ENCODE measurements at regions of chr10 and their contacts with region 1.

Region 1: GRCh38 chr10:121927841-121928527 is at the start of gene ATE1:
- DNase-seq: peak; percentile 84
- ATAC-seq: peak; percentile 81
- H3K4me3 ChIP-seq: peak within 1 kb of the TSS; percentile 77
- H3K27ac ChIP-seq: peak within 1 kb of the TSS; percentile 94
- H3K4me1 ChIP-seq: peaks cover 12% of the 10 kb centered on the region
- H3K27me3 ChIP-seq: no peaks in the 10 kb centered on the region
- CTCF ChIP-seq: no peak
- total RNA-seq, gene ATE1: 7.9 and 12.8 TPM in 2 replicates

Region 2: GRCh38 chr10:121608469-121609190 is 319.4 kb before region 1 on chr10:
- CTCF ChIA-PET with region 1: no interaction called
- POLR2A ChIA-PET with region 1: no interaction called
- intact Hi-C with region 1: no loop called
- DNase-seq: peak; percentile 48
- ATAC-seq: peak; percentile 88
- H3K4me3 ChIP-seq: no peak overlapping the region
- H3K27ac ChIP-seq: no peak overlapping the region
- H3K4me1 ChIP-seq: no peaks in the 10 kb centered on the region
- H3K27me3 ChIP-seq: peaks cover 7% of the 10 kb centered on the region; the same call in 1 of the 2 replicates
- CTCF ChIP-seq: peak; percentile 78

Region 3: GRCh38 chr10:121886997-121887622 is 40.9 kb before region 1 on chr10:
- CTCF ChIA-PET with region 1: no interaction called
- POLR2A ChIA-PET with region 1: no interaction called
- intact Hi-C with region 1: no loop called
- DNase-seq: peak; percentile 68
- ATAC-seq: peak; percentile 87
- H3K4me3 ChIP-seq: no peak overlapping the region
- H3K27ac ChIP-seq: no peak overlapping the region
- H3K4me1 ChIP-seq: peaks cover 8% of the 10 kb centered on the region; the same call in 1 of the 2 replicates
- H3K27me3 ChIP-seq: no peaks in the 10 kb centered on the region
- CTCF ChIP-seq: peak; percentile 78

Region 4: GRCh38 chr10:121942749-121943416 is 14.9 kb after region 1 on chr10:
- CTCF ChIA-PET with region 1: no interaction called
- POLR2A ChIA-PET with region 1: interaction called, 11 read pairs
- intact Hi-C with region 1: no loop called
- DNase-seq: peak; percentile 88
- ATAC-seq: peak; percentile 100
- H3K4me3 ChIP-seq: no peak overlapping the region
- H3K27ac ChIP-seq: peak overlapping the region; percentile 90
- H3K4me1 ChIP-seq: peaks cover 16% of the 10 kb centered on the region
- H3K27me3 ChIP-seq: no peaks in the 10 kb centered on the region
- CTCF ChIP-seq: no peak

Region 5: DNA sequence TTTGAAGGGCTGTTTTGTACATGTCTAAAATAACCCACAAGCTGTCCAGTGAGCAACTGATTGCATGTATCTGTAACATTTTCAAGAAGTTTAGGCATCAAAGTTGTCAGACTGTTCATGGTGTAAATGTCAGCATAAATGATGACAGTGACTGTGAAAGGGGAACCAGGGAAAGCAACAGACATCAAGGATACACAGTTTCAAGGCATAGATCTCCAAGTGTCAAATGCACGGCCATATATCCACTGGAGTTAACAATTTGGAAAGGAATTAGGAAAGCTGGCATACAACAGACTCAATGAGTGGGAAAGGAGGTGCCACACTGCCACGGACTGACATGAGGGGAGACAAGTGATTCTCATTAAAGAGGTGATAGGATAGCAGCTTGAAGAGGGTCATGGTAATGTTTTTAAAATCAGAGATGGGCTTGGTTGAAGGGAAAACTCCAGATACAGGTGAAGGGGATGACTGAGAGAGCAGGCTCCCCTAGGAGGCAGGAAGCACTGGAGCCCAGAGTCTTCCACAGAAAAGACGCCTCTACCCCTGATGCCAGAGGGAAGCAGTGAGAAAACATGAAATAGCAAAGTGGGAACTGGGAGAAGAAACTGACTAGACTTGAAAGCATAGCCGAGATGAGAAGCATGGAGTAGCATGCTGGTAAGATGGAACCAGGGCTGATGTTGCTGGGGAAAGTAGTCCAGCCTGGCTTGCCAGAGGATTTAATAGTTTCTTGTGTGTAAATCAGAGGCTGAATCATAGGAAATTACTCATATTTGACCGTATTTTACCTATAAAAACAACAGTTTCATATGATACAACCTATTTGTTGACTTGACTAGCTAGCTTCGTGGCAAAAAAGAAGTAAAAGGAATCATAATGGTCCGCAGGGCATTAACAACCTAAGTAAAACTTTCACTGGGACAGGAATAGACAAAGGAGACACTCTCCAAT is 28.4 kb after region 1 on chr10:
- CTCF ChIA-PET with region 1: no interaction called
- POLR2A ChIA-PET with region 1: no interaction called
- intact Hi-C with region 1: loop called (anchors 2 kb)
- DNase-seq: peak; percentile 83
- ATAC-seq: peak; percentile 92
- H3K4me3 ChIP-seq: peak overlapping the region; percentile 18; the same call in 1 of the 2 replicates
- H3K27ac ChIP-seq: peak overlapping the region; percentile 92
- H3K4me1 ChIP-seq: peaks cover 17% of the 10 kb centered on the region
- H3K27me3 ChIP-seq: no peaks in the 10 kb centered on the region
- CTCF ChIP-seq: no peak

Region 6: GRCh38 chr10:121974535-121975294 is 46.7 kb after region 1 on chr10 and contains the start of gene NSMCE4A:
- CTCF ChIA-PET with region 1: no interaction called
- POLR2A ChIA-PET with region 1: no interaction called
- intact Hi-C with region 1: loop called (anchors 1 kb)
- DNase-seq: peak; percentile 71
- ATAC-seq: peak; percentile 81
- H3K4me3 ChIP-seq: peak within 1 kb of the TSS; percentile 90
- H3K27ac ChIP-seq: peak within 1 kb of the TSS; percentile 90
- H3K4me1 ChIP-seq: peaks cover 7% of the 10 kb centered on the region; the same call in 1 of the 2 replicates
- H3K27me3 ChIP-seq: no peaks in the 10 kb centered on the region
- CTCF ChIP-seq: peak; percentile 72
- total RNA-seq, gene NSMCE4A: 46.3 and 47.3 TPM in 2 replicates